Tibial artery (tissue), 4 donors: ENCODE measurements at regions of chr9 and their contacts with region 1.

Region 1: GRCh38 chr9:81002242-81002641 is 687.1 kb downstream of the TLE1 start:
- DNase-seq: no peak
- H3K4me3 ChIP-seq: no peak overlapping the region
- H3K27ac ChIP-seq: no peak overlapping the region
- H3K4me1 ChIP-seq: no peaks in the 10 kb centered on the region
- H3K27me3 ChIP-seq: no peaks in the 10 kb centered on the region
- CTCF ChIP-seq: no peak

Region 2: DNA sequence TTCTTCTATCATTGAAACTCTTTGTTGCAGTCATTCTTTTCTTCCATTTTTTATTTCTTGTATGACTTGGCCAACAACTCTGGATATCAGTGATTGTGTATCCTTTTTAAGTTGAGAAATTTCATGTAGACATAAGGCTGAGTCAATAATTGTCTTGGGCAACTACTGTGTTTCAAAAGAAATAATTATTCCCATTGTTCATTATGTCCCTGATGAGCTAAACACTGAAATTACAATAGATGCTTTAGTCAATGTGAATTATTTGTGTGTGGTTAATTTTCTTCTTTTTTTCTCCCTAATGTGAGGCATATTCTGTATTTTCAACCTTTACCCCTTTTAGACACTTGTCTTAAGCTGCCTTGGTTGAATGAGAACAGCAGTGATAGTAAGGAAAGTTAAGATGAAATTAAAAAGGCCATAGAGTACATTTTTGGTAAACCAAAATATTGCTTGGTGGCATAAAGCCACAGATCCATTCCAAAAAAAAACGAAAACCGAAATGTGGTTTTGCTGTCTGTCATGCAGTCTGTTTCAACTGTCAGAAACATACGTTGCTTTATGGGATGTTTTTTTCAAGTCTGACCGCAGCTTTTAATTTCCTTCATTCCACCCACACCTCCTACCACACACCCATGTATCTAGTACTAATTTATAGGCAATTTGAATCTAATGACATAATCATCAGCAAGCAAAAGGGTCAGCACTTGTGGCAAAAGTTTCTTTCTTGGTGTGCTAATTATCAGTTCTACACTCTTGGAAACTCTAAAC is 1409.3 kb before region 1 on chr9:
- intact Hi-C with region 1: loop called (anchors 10 kb)
- DNase-seq: no peak
- H3K4me3 ChIP-seq: no peak overlapping the region
- H3K27ac ChIP-seq: no peak overlapping the region
- H3K4me1 ChIP-seq: peaks cover 0 to 29% (median 0%) of the 10 kb centered on the region in 4 donors
- H3K27me3 ChIP-seq: no peaks in the 10 kb centered on the region
- CTCF ChIP-seq: no peak

Region 3: GRCh38 chr9:81361296-81361695 is 359.1 kb after region 1 on chr9:
- intact Hi-C with region 1: no loop called
- DNase-seq: no peak
- H3K4me3 ChIP-seq: no peak overlapping the region
- H3K27ac ChIP-seq: no peak overlapping the region
- H3K4me1 ChIP-seq: no peaks in the 10 kb centered on the region
- H3K27me3 ChIP-seq: no peaks in the 10 kb centered on the region
- CTCF ChIP-seq: no peak